Calu3 (cell line): ENCODE measurements at regions of chr2 and their contacts with region 1.

Region 1: GRCh38 chr2:147525819-147526489 is 318.9 kb upstream of the ACVR2A start:
- DNase-seq: no peak
- H3K4me3 Mint-ChIP-seq: no peak overlapping the region
- H3K27ac Mint-ChIP-seq: no peak overlapping the region
- H3K4me1 Mint-ChIP-seq: peaks cover 10% of the 10 kb centered on the region
- H3K27me3 Mint-ChIP-seq: no peaks in the 10 kb centered on the region
- CTCF ChIP-seq: no peak

Region 2: GRCh38 chr2:147501968-147502367 is 24.0 kb before region 1 on chr2:
- CTCF ChIA-PET with region 1: no interaction called
- intact Hi-C with region 1: loop called (anchors 1 kb)
- DNase-seq: no peak
- H3K4me3 Mint-ChIP-seq: no peak overlapping the region
- H3K27ac Mint-ChIP-seq: no peak overlapping the region
- H3K4me1 Mint-ChIP-seq: no peaks in the 10 kb centered on the region
- H3K27me3 Mint-ChIP-seq: no peaks in the 10 kb centered on the region
- CTCF ChIP-seq: no peak